Activated CD4-positive, alpha-beta T cell treated with anti-CD3 and anti-CD28 coated beads for 36 hours (primary cell): ENCODE measurements at regions of chr5 and their contacts with region 1.

Region 1: GRCh38 chr5:139417214-139417613 is 13.3 kb upstream of the SPATA24 start:
- DNase-seq: no peak
- ATAC-seq: no peak
- H3K4me3 Mint-ChIP-seq: no peak overlapping the region
- H3K27ac Mint-ChIP-seq: peak overlapping the region; percentile 98
- H3K4me1 Mint-ChIP-seq: peaks cover 50% of the 10 kb centered on the region
- H3K27me3 Mint-ChIP-seq: no peaks in the 10 kb centered on the region

Region 2: GRCh38 chr5:139104577-139105276 is 312.5 kb before region 1 on chr5:
- CTCF ChIA-PET with region 1: no interaction called
- POLR2A ChIA-PET with region 1: no interaction called
- intact Hi-C with region 1: no loop called
- DNase-seq: no peak
- ATAC-seq: no peak
- H3K4me3 Mint-ChIP-seq: no peak overlapping the region
- H3K27ac Mint-ChIP-seq: no peak overlapping the region
- H3K4me1 Mint-ChIP-seq: no peaks in the 10 kb centered on the region
- H3K27me3 Mint-ChIP-seq: peaks cover 2% of the 10 kb centered on the region

Region 3: GRCh38 chr5:139138809-139139208 is 278.4 kb before region 1 on chr5:
- CTCF ChIA-PET with region 1: no interaction called
- POLR2A ChIA-PET with region 1: no interaction called
- intact Hi-C with region 1: no loop called
- DNase-seq: no peak
- ATAC-seq: no peak
- H3K4me3 Mint-ChIP-seq: no peak overlapping the region
- H3K27ac Mint-ChIP-seq: no peak overlapping the region
- H3K4me1 Mint-ChIP-seq: peaks cover 13% of the 10 kb centered on the region
- H3K27me3 Mint-ChIP-seq: peaks cover 2% of the 10 kb centered on the region

Region 4: DNA sequence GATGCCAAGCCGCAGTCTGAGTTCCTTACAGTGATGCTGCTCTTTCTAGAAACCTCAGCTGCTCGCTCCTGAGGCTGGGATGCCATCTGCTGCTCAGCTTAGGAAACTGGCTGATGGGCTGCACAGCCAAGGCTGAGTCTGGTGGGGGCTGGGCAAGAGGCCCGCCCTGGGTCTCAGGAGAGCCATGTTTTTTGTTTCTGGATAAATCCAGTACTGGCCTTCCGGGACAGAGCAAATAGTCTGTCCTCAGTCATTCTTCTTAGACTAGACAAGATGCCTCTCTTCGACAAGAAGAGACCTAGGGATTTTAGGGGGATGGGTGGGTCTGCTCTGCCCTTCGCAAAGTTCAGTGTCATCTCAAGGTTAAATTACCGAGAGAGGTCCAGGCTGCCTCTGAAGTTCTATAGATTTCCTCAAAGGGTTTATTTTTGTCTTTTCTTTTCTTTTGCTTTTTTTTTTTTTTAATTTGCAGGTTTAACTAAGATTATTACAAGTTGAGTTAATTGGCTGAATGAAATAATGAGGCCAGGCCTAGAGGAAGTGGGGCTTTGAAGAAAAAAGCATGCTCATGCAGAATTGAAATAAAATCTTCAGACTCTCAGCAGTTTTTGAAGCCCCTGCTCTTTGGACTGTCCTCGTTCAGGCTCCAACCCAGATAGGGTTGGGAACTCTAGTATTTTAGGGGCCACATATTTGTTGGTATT is 154.3 kb before region 1 on chr5:
- CTCF ChIA-PET with region 1: no interaction called
- POLR2A ChIA-PET with region 1: no interaction called
- intact Hi-C with region 1: no loop called
- DNase-seq: peak; percentile 87
- ATAC-seq: peak; percentile 100
- H3K4me3 Mint-ChIP-seq: no peak overlapping the region
- H3K27ac Mint-ChIP-seq: no peak overlapping the region
- H3K4me1 Mint-ChIP-seq: peaks cover 4% of the 10 kb centered on the region
- H3K27me3 Mint-ChIP-seq: peaks cover 3% of the 10 kb centered on the region

Region 5: GRCh38 chr5:139403787-139404483 is 13.3 kb before region 1 on chr5 and contains the start of gene SPATA24:
- CTCF ChIA-PET with region 1: interaction called, 14 read pairs
- POLR2A ChIA-PET with region 1: interaction called, 4 read pairs
- intact Hi-C with region 1: loop called (anchors 1 kb)
- DNase-seq: peak; percentile 100
- ATAC-seq: peak; percentile 93
- H3K4me3 Mint-ChIP-seq: peak within 1 kb of the TSS; percentile 79
- H3K27ac Mint-ChIP-seq: peak within 1 kb of the TSS; percentile 99
- H3K4me1 Mint-ChIP-seq: peaks cover 37% of the 10 kb centered on the region
- H3K27me3 Mint-ChIP-seq: no peaks in the 10 kb centered on the region
- total RNA-seq, gene SPATA24: 4.6 to 5.9 TPM

Region 6: GRCh38 chr5:139458580-139459406 is 41.6 kb after region 1 on chr5:
- CTCF ChIA-PET with region 1: interaction called, 9 read pairs
- POLR2A ChIA-PET with region 1: no interaction called
- intact Hi-C with region 1: loop called in 1 of 2 experiments (anchors 1 kb)
- DNase-seq: peak; percentile 90
- ATAC-seq: peak; percentile 91
- H3K4me3 Mint-ChIP-seq: peak overlapping the region; percentile 57
- H3K27ac Mint-ChIP-seq: peak overlapping the region; percentile 94
- H3K4me1 Mint-ChIP-seq: peaks cover 64% of the 10 kb centered on the region
- H3K27me3 Mint-ChIP-seq: no peaks in the 10 kb centered on the region

Region 7: DNA sequence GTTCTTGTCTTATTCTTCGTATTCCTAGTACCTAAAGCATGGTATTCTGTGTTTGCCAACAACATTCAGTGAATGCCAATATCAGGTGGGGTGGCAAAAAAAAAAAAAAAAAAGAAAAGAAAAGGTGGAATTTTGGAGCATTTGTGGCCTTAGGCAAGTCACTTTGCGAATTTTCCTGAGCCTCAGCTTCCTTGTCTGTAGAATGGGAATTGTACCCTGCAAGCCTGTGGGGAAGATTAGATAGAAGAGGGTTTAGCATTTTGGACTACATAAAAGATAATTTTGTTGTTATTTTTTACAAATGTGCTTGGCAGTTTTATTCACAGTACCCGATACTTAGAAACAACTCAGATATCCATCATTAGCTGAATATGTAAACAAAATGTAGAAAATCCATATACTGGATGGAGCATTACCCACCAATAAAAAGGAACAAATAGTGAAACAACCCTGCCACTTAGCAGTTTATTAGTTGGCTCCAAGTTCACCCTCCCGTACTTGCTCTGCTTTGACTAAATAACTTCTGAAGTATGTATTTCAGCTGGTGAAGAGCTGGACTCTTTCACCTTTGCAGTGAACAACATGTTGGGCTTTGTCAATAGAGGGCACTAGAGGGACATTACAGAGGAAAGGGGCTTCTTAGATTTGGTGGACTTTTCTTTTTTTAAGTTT is 157.6 kb after region 1 on chr5:
- CTCF ChIA-PET with region 1: interaction called, 7 read pairs
- POLR2A ChIA-PET with region 1: no interaction called
- intact Hi-C with region 1: loop called in 1 of 2 experiments (anchors 2 kb)
- DNase-seq: no peak
- ATAC-seq: peak; percentile 23
- H3K4me3 Mint-ChIP-seq: no peak overlapping the region
- H3K27ac Mint-ChIP-seq: no peak overlapping the region
- H3K4me1 Mint-ChIP-seq: peaks cover 79% of the 10 kb centered on the region
- H3K27me3 Mint-ChIP-seq: no peaks in the 10 kb centered on the region

Region 8: GRCh38 chr5:139765409-139766217 is 348.4 kb after region 1 on chr5:
- CTCF ChIA-PET with region 1: no interaction called
- POLR2A ChIA-PET with region 1: interaction called, 4 read pairs
- intact Hi-C with region 1: loop called (anchors 5 to 10 kb)
- DNase-seq: peak; percentile 92
- ATAC-seq: peak; percentile 93
- H3K4me3 Mint-ChIP-seq: peak overlapping the region; percentile 58
- H3K27ac Mint-ChIP-seq: no peak overlapping the region
- H3K4me1 Mint-ChIP-seq: peaks cover 7% of the 10 kb centered on the region
- H3K27me3 Mint-ChIP-seq: peaks cover 26% of the 10 kb centered on the region

Region 9: GRCh38 chr5:140207250-140207964 is 790.2 kb after region 1 on chr5:
- CTCF ChIA-PET with region 1: no interaction called
- POLR2A ChIA-PET with region 1: no interaction called
- intact Hi-C with region 1: no loop called
- DNase-seq: no peak
- ATAC-seq: no peak
- H3K4me3 Mint-ChIP-seq: no peak overlapping the region
- H3K27ac Mint-ChIP-seq: no peak overlapping the region
- H3K4me1 Mint-ChIP-seq: peaks cover 4% of the 10 kb centered on the region
- H3K27me3 Mint-ChIP-seq: no peaks in the 10 kb centered on the region